ENCODE measurements at regions of chr18 and their contacts with region 1.

Region 1: GRCh38 chr18:23938043-23938756 is 76.4 kb upstream of the TTC39C start:
- DNase-seq: no peak
- H3K4me3 ChIP-seq: no peak overlapping the region
- CTCF ChIP-seq: no peak
- POLR2A ChIP-seq: no peak

Region 2: DNA sequence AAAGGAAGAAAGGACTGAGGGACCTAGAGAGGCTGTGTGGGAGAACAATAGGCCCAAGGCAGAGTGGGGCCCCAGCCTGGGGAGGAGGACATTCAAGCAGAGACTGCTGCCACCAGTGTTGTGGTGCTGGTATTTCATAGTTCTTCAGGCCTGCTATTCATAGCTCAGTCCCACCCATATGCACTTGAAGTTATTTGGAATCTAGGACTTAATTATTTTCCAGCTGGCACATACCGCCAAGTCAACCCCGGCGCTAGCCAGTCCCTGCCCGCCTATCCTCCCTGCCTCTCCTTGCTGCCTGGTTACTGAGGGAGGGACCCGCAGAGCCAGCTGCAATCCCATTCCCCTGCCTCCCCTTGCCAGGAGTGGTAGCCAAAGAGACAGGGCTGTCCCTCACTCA is 661.7 kb before region 1 on chr18:
- intact Hi-C with region 1: no loop called
- DNase-seq: no peak
- H3K4me3 ChIP-seq: no peak overlapping the region
- CTCF ChIP-seq: no peak
- POLR2A ChIP-seq: no peak

Region 3: DNA sequence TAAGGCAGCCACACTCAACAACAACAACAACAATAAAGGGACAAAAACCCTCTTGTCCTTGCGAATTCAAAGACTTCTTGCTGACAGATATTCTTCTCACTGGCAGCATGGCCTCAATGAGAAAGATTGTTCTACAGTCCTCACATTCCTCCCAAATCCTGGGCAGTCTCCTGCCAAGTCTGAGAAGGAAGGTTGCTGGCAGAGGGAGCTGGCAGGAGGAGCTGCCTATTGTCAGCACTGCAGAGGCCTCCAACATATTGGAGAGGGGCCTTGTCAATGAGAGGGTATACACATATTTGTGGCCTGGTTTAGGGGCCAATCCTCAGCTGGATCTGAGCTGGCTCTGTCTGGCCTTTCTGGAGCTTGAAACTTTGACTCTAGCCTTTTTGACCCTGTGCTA is 185.4 kb before region 1 on chr18:
- intact Hi-C with region 1: no loop called
- DNase-seq: no peak
- H3K4me3 ChIP-seq: no peak overlapping the region
- CTCF ChIP-seq: no peak
- POLR2A ChIP-seq: no peak

Region 4: DNA sequence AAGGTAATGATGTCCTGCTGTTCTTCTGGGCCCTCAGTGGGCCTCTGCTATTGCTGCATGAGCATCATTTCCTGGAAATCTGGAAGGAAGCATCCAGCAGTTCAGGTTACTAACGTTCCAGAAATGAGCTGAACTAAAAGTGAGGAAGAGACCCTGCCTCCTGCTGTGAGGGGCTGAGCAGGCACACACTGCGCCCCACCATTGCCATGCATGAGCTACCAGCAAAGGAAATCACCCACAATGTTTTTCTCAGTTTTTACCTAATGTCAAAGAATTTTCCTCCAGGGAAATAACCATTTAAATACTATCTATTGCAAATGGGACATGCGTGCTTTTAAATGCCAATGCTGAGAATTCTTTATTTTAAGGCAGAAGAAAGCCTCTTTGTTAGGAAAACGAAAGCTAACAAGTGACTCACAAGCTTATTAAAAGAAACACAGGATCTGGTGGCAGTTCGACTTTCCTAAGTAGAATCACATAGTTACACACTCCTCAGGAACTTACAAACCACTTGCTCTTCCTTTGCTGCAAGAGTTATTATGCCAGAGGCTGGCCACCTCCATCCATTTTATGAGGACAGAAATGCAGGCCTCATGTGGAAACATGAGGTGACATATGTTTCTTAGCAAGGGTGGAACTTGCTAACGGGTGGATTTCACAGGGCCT is 76.3 kb before region 1 on chr18:
- intact Hi-C with region 1: no loop called
- DNase-seq: no peak
- H3K4me3 ChIP-seq: no peak overlapping the region
- CTCF ChIP-seq: no peak
- POLR2A ChIP-seq: no peak

Region 5: GRCh38 chr18:24089076-24089475 is 150.9 kb after region 1 on chr18:
- intact Hi-C with region 1: no loop called
- DNase-seq: no peak
- H3K4me3 ChIP-seq: no peak overlapping the region
- CTCF ChIP-seq: no peak
- POLR2A ChIP-seq: no peak

Region 6: DNA sequence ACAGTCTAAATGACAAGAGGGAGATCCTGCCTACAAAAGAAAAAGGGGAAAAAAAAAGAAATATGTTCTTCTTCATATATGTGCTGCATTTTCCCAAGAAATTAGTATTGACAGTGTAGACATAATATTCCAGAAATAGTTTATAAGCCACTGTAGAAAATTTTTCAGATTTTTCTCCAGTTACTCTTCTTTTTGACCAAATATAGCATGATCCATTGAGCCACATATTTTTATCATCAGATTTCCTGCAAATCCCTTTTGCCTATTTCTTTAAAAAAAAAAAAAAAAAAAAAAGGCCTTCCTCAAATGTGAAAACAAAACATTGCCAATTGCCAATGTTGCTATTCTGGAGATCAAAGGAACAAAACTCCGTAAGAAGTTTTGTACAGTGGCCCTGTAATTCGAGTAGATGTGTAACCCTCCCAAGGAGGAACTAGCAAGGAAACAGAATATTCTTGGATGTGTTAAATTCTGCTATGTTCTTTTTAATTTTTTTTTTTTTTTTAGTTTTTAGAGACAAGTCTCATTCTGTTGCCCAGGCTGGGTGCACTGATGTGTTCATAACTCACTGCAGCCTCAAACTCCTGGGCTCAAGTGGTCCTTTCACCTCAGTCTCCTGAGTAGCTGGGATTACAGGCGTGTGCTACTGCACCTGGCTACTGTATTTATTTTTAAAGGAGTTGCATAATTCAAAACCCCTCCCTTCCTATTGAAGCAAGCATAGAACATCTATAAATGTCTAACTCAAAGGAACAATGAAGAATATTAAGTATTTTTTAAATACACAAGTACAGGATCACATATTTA is 188.2 kb after region 1 on chr18:
- intact Hi-C with region 1: loop called (anchors 10 kb)
- DNase-seq: no peak
- H3K4me3 ChIP-seq: no peak overlapping the region
- CTCF ChIP-seq: no peak
- POLR2A ChIP-seq: no peak